ENCODE measurements at regions of chr13 and their contacts with region 1.

Region 1: DNA sequence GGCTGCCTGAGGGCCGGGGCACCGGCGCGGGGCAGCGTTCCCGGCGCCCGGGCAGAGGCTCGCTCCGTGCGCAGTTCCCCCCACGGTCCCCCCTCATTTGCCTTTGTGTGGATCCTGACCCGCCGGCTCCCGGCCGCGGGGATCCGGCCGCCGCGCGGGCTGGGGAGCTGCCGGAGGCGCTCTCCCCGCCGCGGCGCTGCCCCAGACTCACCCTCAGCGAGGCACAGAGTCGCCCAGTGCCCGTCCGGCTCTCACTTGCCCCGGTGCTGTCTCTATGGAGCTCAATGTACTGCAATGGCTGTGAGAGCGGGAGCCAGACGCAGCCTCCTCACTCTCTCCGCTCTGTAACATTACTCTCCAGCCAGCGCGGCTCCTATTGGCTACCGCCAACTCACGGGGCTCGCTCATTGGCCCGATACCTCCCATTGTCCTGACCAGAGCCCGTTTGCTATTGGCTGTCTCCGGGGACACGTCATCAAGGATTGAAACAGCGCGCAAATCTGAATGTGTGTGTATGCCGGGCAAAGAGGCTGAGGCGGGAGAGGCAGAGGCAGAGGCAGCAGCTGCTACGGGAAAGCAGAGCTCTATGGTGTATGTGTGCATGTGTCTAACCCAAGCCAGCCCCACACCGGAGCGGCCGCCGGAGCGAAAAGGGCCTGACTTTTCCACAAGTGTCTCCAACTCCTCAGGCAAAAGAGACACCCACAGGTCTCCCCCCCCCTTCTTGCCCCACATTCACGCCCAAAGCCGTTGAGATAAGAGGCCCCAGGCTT is at the start of gene HMGB1:
- DNase-seq: peak; percentile 99
- ATAC-seq: peak; percentile 90
- H3K4me3 Mint-ChIP-seq: peak within 1 kb of the TSS; percentile 97
- H3K27ac Mint-ChIP-seq: peak within 1 kb of the TSS; percentile 97
- H3K4me1 Mint-ChIP-seq: peaks cover 25% of the 10 kb centered on the region
- H3K27me3 Mint-ChIP-seq: peaks cover 1% of the 10 kb centered on the region
- CTCF ChIP-seq: no peak
- total RNA-seq, gene HMGB1: 666 to 676 TPM

Region 2: GRCh38 chr13:30371649-30372265 is 94.0 kb before region 1 on chr13:
- CTCF ChIA-PET with region 1: interaction called, 3 read pairs
- POLR2A ChIA-PET with region 1: interaction called, 7 read pairs
- intact Hi-C with region 1: loop called (anchors 10 kb)
- DNase-seq: peak; percentile 78
- ATAC-seq: peak; percentile 64
- H3K4me3 Mint-ChIP-seq: peak overlapping the region; percentile 34
- H3K27ac Mint-ChIP-seq: peak overlapping the region; percentile 85
- H3K4me1 Mint-ChIP-seq: peaks cover 78% of the 10 kb centered on the region
- H3K27me3 Mint-ChIP-seq: no peaks in the 10 kb centered on the region
- CTCF ChIP-seq: no peak

Region 3: GRCh38 chr13:30572859-30573275 is 107.1 kb after region 1 on chr13:
- CTCF ChIA-PET with region 1: interaction called, 3 read pairs
- POLR2A ChIA-PET with region 1: interaction called, 6 read pairs
- intact Hi-C with region 1: loop called (anchors 10 kb)
- DNase-seq: peak; percentile 17
- ATAC-seq: peak; percentile 69
- H3K4me3 Mint-ChIP-seq: peak overlapping the region; percentile 51
- H3K27ac Mint-ChIP-seq: peak overlapping the region; percentile 73
- H3K4me1 Mint-ChIP-seq: peaks cover 42% of the 10 kb centered on the region
- H3K27me3 Mint-ChIP-seq: no peaks in the 10 kb centered on the region
- CTCF ChIP-seq: peak; percentile 27

Region 4: GRCh38 chr13:30617315-30618185 is 151.8 kb after region 1 on chr13 and contains the start of gene USPL1:
- CTCF ChIA-PET with region 1: interaction called, 4 read pairs
- POLR2A ChIA-PET with region 1: interaction called, 49 read pairs
- intact Hi-C with region 1: loop called (anchors 5 kb)
- DNase-seq: peak; percentile 98
- ATAC-seq: peak; percentile 90
- H3K4me3 Mint-ChIP-seq: no peak within 1 kb of the TSS
- H3K27ac Mint-ChIP-seq: no peak within 1 kb of the TSS
- H3K4me1 Mint-ChIP-seq: peaks cover 23% of the 10 kb centered on the region
- H3K27me3 Mint-ChIP-seq: no peaks in the 10 kb centered on the region
- CTCF ChIP-seq: no peak
- total RNA-seq, gene USPL1: 12.4 to 13.0 TPM